ENCODE measurements at regions of chr15 and their contacts with region 1.

Region 1: GRCh38 chr15:58770857-58771620 is at the start of gene MINDY2:
- DNase-seq: peak; percentile 96
- H3K4me3 Mint-ChIP-seq: no peak within 1 kb of the TSS
- H3K27ac Mint-ChIP-seq: peak within 1 kb of the TSS; percentile 84
- H3K4me1 Mint-ChIP-seq: peaks cover 10% of the 10 kb centered on the region
- H3K27me3 Mint-ChIP-seq: no peaks in the 10 kb centered on the region
- total RNA-seq, gene MINDY2: 17.3 to 18.0 TPM

Region 2: GRCh38 chr15:58227706-58228543 is 543.1 kb before region 1 on chr15:
- CTCF ChIA-PET with region 1: interaction called, 11 read pairs
- POLR2A ChIA-PET with region 1: interaction called, 4 read pairs
- DNase-seq: peak; percentile 74
- H3K4me3 Mint-ChIP-seq: no peak overlapping the region
- H3K27ac Mint-ChIP-seq: no peak overlapping the region
- H3K4me1 Mint-ChIP-seq: peaks cover 10% of the 10 kb centered on the region
- H3K27me3 Mint-ChIP-seq: peaks cover 20% of the 10 kb centered on the region

Region 3: GRCh38 chr15:58269455-58270414 is 501.3 kb before region 1 on chr15:
- CTCF ChIA-PET with region 1: interaction called, 20 read pairs
- POLR2A ChIA-PET with region 1: no interaction called
- DNase-seq: peak; percentile 45
- H3K4me3 Mint-ChIP-seq: no peak overlapping the region
- H3K27ac Mint-ChIP-seq: no peak overlapping the region
- H3K4me1 Mint-ChIP-seq: peaks cover 10% of the 10 kb centered on the region
- H3K27me3 Mint-ChIP-seq: peaks cover 2% of the 10 kb centered on the region

Region 4: DNA sequence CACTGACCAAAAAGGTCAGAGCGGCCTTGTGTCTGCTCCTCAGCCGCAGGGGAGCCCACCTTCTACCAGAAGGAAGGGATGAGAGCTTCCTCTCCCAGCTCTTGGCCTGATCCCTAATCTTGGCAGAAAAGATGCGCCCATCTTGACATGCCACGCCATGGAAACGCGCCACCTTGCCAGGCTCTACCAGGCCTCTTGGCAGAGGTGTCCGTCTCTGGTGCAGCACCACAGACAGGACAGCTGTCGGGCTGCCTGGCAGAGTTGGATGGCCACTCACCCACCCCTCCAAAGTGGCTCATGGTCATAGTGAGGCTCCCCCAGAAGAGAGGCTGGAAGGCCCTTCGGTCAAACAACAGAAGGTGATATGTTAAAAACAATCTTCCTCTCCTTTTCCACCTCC is 234.0 kb before region 1 on chr15:
- CTCF ChIA-PET with region 1: no interaction called
- POLR2A ChIA-PET with region 1: no interaction called
- DNase-seq: no peak
- H3K4me3 Mint-ChIP-seq: no peak overlapping the region
- H3K27ac Mint-ChIP-seq: no peak overlapping the region
- H3K4me1 Mint-ChIP-seq: no peaks in the 10 kb centered on the region
- H3K27me3 Mint-ChIP-seq: peaks cover 35% of the 10 kb centered on the region

Region 5: GRCh38 chr15:58749532-58750337 is 21.3 kb before region 1 on chr15 and contains the start of gene ADAM10:
- CTCF ChIA-PET with region 1: interaction called, 35 read pairs
- POLR2A ChIA-PET with region 1: interaction called, 79 read pairs
- DNase-seq: peak; percentile 99
- H3K4me3 Mint-ChIP-seq: peak within 1 kb of the TSS; percentile 96
- H3K27ac Mint-ChIP-seq: peak within 1 kb of the TSS; percentile 93
- H3K4me1 Mint-ChIP-seq: peaks cover 41% of the 10 kb centered on the region
- H3K27me3 Mint-ChIP-seq: peaks cover 5% of the 10 kb centered on the region
- total RNA-seq, gene ADAM10: 147 to 150 TPM

Region 6: GRCh38 chr15:58761010-58761388 is 10.0 kb before region 1 on chr15:
- CTCF ChIA-PET with region 1: interaction called, 30 read pairs
- POLR2A ChIA-PET with region 1: interaction called, 10 read pairs
- DNase-seq: peak; percentile 34
- H3K4me3 Mint-ChIP-seq: no peak overlapping the region
- H3K27ac Mint-ChIP-seq: no peak overlapping the region
- H3K4me1 Mint-ChIP-seq: peaks cover 2% of the 10 kb centered on the region
- H3K27me3 Mint-ChIP-seq: peaks cover 6% of the 10 kb centered on the region

Region 7: GRCh38 chr15:58909616-58910015 is 138.6 kb after region 1 on chr15:
- CTCF ChIA-PET with region 1: no interaction called
- POLR2A ChIA-PET with region 1: no interaction called
- DNase-seq: no peak
- H3K4me3 Mint-ChIP-seq: no peak overlapping the region
- H3K27ac Mint-ChIP-seq: peak overlapping the region; percentile 23
- H3K4me1 Mint-ChIP-seq: peaks cover 45% of the 10 kb centered on the region
- H3K27me3 Mint-ChIP-seq: no peaks in the 10 kb centered on the region

Region 8: DNA sequence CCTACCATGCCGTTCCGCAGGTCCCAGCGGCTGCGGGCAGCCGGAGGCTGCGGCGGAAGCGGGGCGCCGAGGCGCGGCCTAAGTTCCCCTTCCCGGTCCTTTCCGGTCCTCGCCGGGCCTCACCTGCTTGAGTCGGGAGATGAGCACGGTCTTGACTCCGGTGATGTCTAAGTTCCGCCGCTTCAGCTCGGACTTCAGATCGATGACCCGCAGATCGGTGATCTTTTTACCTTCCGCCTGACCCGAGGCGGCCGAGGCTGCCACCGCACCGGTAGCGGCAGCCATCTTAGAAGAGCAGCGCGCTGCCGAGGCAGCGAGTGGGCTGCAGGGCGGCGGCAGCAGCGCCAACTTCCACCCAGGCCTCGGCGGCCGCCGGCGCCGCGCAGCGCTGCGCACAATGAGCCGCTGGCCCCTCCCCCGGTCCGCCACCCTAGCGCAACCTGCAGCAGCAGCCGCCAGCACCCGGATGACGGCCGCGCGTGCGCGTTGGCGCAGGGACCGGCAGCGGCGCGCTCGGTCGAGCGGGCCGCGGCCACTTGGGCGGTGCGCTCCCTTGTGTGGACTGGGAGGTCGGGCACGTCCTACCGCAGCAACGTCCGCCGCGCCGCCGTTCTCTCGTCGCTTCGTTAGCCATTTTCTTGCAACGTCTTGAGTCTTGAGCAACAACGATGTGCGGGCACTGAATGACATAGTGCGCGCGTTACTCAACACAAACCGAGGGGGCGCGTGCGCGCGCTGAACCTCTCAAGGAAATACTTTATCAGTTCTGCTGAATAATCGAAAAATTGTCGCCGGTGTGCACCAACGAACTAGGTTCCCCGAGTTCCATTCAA is 162.5 kb after region 1 on chr15 and contains the start of gene SLTM:
- CTCF ChIA-PET with region 1: interaction called, 7 read pairs
- POLR2A ChIA-PET with region 1: interaction called, 17 read pairs
- DNase-seq: peak; percentile 95
- H3K4me3 Mint-ChIP-seq: peak within 1 kb of the TSS; percentile 96
- H3K27ac Mint-ChIP-seq: peak within 1 kb of the TSS; percentile 98
- H3K4me1 Mint-ChIP-seq: peaks cover 29% of the 10 kb centered on the region
- H3K27me3 Mint-ChIP-seq: no peaks in the 10 kb centered on the region
- total RNA-seq, gene SLTM: 108 to 117 TPM